Activated CD4-positive, alpha-beta T cell treated with anti-CD3 and anti-CD28 coated beads, Interleukin-2, amount 10 ng/mL, durations not matched to agents 24 days and 14 days (primary cell): ENCODE measurements at regions of chr11 and their contacts with region 1.

Region 1: DNA sequence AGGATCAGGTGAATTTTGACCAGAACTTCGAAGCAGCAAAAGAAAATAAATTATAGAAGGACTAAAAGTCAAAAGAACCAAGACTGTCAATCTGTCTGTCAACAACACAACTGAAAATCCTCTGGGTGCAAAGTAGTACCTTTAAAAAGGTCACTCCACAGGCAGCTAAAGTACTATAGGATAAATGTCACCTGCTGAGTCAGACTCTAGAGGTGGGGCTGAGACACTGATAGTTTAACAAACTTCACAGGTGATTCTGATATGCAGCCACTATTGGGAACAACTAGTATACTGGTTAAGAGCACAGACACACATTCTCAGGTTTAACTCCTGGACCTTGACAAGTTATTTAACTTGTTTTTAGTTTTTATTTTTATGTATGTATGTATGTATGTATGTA is 107.3 kb downstream of the FCHSD2 start:
- DNase-seq: peak; percentile 61
- H3K4me3 Mint-ChIP-seq: peak overlapping the region; percentile 58
- H3K27ac Mint-ChIP-seq: peak overlapping the region; percentile 88
- H3K4me1 Mint-ChIP-seq: peaks cover 17% of the 10 kb centered on the region
- H3K27me3 Mint-ChIP-seq: no peaks in the 10 kb centered on the region

Region 2: GRCh38 chr11:72752088-72752914 is 282.5 kb before region 1 on chr11 and contains the start of gene ARAP1:
- intact Hi-C with region 1: no loop called
- DNase-seq: peak; percentile 91
- H3K4me3 Mint-ChIP-seq: peak within 1 kb of the TSS; percentile 87
- H3K27ac Mint-ChIP-seq: peak within 1 kb of the TSS; percentile 94
- H3K4me1 Mint-ChIP-seq: peaks cover 24% of the 10 kb centered on the region
- H3K27me3 Mint-ChIP-seq: no peaks in the 10 kb centered on the region
- total RNA-seq, gene ARAP1: 76.9 and 81.5 TPM in 2 replicates

Region 3: DNA sequence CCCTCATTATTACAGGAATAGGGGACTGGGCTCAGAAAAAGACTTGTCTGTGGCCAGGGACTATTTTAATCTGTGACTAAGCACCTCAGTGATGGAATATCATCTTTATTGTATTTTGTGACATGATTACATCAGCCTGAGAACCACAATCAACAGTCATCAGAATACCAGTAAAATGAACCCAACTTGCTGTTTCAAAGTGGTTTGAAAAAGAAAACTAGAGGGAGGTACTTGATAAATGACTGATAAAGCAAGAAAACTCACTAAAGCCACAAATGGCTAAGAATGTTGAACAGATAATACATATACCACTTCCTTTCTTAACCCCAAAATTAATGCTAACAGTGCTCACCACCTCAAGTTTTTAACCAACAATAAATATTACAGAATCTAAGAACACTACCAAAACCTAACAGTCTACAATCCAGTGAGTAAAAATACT is 64.9 kb before region 1 on chr11:
- intact Hi-C with region 1: loop called (anchors 1 kb)
- DNase-seq: peak; percentile 68
- H3K4me3 Mint-ChIP-seq: peak overlapping the region; percentile 9
- H3K27ac Mint-ChIP-seq: peak overlapping the region; percentile 27
- H3K4me1 Mint-ChIP-seq: peaks cover 53% of the 10 kb centered on the region
- H3K27me3 Mint-ChIP-seq: no peaks in the 10 kb centered on the region

Region 4: DNA sequence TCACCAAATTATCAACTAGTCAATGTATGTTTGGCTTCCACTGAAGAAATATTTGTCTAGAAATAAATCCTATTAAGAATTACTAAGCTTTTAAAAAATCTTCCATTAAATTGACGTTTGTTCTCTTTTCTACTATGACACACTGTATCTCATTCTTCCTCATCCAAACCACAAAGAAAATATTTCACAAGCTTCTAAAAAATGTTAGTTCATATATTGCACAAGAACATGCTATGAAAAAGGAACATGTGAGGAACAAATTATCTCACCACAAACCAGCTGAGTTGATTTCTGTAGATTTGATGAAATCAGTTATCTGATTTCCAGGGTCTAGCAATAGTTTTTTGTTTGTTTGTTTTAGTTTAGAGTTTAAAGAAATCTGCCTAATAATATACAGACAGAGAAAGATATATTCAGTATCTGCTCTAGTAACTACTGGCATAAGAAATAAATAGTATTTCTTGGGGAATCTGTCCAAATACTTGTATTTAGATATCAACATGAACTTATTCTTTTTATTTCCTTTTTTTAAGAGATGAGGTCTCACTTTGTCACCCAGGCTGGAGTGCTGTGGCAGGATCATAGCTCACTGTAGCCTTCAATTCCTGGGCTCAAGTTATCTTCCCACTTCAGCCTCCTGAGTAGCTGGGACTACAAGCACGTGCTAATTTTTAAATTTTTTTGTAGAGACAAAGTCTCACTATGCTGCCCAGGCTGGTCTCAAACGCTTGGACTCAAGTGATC is 58.8 kb before region 1 on chr11:
- intact Hi-C with region 1: loop called (anchors 1 kb)
- DNase-seq: no peak
- H3K4me3 Mint-ChIP-seq: no peak overlapping the region
- H3K27ac Mint-ChIP-seq: no peak overlapping the region
- H3K4me1 Mint-ChIP-seq: peaks cover 35% of the 10 kb centered on the region
- H3K27me3 Mint-ChIP-seq: no peaks in the 10 kb centered on the region

Region 5: DNA sequence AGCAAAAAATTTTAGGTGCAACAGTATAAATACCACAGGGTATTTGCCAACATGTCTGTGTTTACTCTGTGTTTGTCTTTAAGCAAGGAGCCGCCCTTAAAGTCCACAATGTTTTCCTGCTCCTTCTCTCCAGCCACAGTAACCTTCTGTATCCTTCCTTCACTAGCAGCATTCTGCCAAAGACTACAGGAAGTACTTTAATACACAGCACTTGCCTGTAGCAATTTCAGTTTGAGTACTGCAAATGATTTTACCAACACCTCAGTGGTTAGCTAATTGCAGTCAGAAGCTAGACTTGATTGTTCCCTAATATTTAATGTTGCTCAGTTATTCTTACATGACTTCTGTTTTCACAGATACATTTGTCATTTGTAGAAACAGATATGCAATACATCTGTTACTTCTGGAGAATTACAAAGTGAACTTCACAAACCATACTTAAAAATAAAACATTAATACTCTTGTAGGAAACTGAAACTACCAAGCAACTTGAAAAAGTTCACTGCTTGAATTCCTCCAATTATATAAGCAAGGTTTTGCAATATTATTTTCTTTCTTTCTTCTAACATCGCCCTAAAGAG is 38.2 kb after region 1 on chr11:
- intact Hi-C with region 1: loop called (anchors 5 kb)
- DNase-seq: peak; percentile 61
- H3K4me3 Mint-ChIP-seq: peak overlapping the region; percentile 19
- H3K27ac Mint-ChIP-seq: no peak overlapping the region
- H3K4me1 Mint-ChIP-seq: peaks cover 23% of the 10 kb centered on the region
- H3K27me3 Mint-ChIP-seq: no peaks in the 10 kb centered on the region

Region 6: GRCh38 chr11:73177778-73178577 is 143.2 kb after region 1 on chr11:
- intact Hi-C with region 1: no loop called
- DNase-seq: peak; percentile 93
- H3K4me3 Mint-ChIP-seq: no peak overlapping the region
- H3K27ac Mint-ChIP-seq: no peak overlapping the region
- H3K4me1 Mint-ChIP-seq: peaks cover 13% of the 10 kb centered on the region
- H3K27me3 Mint-ChIP-seq: peaks cover 18% of the 10 kb centered on the region